CD8-positive, alpha-beta T cell (primary cell): ENCODE measurements at regions of chr22 and their contacts with region 1.

Region 1: GRCh38 chr22:40950962-40951794 is at the start of gene RBX1:
- DNase-seq: peak; percentile 97 to 99 (median 99)
- ATAC-seq: peak; percentile 84
- H3K4me3 ChIP-seq: peak within 1 kb of the TSS; percentile 95 to 100
- H3K4me3 Mint-ChIP-seq: peak within 1 kb of the TSS; percentile 100
- H3K27ac ChIP-seq: peak within 1 kb of the TSS; percentile 99 to 100
- H3K27ac Mint-ChIP-seq: peak within 1 kb of the TSS; percentile 100
- H3K4me1 ChIP-seq: peaks cover 28% of the 10 kb centered on the region
- H3K4me1 Mint-ChIP-seq: peaks cover 33% of the 10 kb centered on the region
- H3K27me3 ChIP-seq: no peaks in the 10 kb centered on the region
- H3K27me3 Mint-ChIP-seq: no peaks in the 10 kb centered on the region
- CTCF ChIP-seq: no peak
- total RNA-seq, gene RBX1: 22.1 to 22.3 TPM

Region 2: DNA sequence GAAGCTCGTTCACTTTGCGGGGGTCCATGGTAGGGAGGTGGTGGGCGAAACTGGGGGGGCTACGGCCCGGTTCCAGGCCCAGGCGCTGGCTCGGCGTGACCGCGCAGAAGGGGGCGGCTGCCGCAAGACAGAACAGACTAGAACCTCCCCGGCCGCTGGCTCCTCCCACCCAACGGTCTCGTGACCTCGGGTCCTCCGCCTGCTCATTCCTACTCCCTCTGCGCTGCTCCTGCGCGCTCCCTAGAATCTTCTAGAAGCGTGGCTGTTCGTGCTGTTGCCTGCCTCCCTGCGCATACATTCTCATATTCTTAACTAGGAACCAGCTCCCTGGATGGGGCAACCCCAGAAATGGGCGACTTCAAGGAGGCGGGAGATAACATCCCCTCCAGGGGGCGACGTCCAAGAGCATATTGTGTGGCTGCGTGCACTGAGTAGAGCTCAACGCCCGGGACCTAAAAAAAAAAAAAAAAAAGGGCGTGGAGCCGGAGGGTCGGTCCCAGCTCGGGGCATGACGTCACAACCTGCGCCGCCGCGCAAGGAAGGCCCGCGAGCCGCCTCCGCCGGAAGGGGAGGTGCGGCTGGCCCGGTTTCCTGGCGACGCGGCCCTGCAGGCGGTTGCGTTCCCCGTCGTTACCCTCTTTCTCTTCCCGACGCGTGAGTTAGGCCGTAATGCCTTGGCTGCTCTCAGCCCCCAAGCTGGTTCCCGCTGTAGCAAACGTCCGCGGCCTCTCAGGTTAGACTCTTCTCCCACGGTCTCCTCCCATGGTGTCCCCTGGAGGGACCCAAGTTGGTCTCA is 94.5 kb before region 1 on chr22 and contains the starts of genes ST13 and XPNPEP3:
- CTCF ChIA-PET with region 1: no interaction called
- POLR2A ChIA-PET with region 1: interaction called, 5 read pairs
- intact Hi-C with region 1: loop called (anchors 1 kb)
- DNase-seq: peak; percentile 92 to 98 (median 97)
- ATAC-seq: peak; percentile 88
- H3K4me3 ChIP-seq: peak within 1 kb of the TSS; percentile 85 to 97
- H3K4me3 Mint-ChIP-seq: peak within 1 kb of the TSS; percentile 98
- H3K27ac ChIP-seq: peak within 1 kb of the TSS; percentile 97 to 99
- H3K27ac Mint-ChIP-seq: peak within 1 kb of the TSS; percentile 100
- H3K4me1 ChIP-seq: peaks cover 40% of the 10 kb centered on the region
- H3K4me1 Mint-ChIP-seq: peaks cover 65% of the 10 kb centered on the region
- H3K27me3 ChIP-seq: no peaks in the 10 kb centered on the region
- H3K27me3 Mint-ChIP-seq: no peaks in the 10 kb centered on the region
- CTCF ChIP-seq: peak; percentile 42
- total RNA-seq, gene ST13: 143 to 160 TPM
- total RNA-seq, gene XPNPEP3: 13.9 to 15.2 TPM

Region 3: DNA sequence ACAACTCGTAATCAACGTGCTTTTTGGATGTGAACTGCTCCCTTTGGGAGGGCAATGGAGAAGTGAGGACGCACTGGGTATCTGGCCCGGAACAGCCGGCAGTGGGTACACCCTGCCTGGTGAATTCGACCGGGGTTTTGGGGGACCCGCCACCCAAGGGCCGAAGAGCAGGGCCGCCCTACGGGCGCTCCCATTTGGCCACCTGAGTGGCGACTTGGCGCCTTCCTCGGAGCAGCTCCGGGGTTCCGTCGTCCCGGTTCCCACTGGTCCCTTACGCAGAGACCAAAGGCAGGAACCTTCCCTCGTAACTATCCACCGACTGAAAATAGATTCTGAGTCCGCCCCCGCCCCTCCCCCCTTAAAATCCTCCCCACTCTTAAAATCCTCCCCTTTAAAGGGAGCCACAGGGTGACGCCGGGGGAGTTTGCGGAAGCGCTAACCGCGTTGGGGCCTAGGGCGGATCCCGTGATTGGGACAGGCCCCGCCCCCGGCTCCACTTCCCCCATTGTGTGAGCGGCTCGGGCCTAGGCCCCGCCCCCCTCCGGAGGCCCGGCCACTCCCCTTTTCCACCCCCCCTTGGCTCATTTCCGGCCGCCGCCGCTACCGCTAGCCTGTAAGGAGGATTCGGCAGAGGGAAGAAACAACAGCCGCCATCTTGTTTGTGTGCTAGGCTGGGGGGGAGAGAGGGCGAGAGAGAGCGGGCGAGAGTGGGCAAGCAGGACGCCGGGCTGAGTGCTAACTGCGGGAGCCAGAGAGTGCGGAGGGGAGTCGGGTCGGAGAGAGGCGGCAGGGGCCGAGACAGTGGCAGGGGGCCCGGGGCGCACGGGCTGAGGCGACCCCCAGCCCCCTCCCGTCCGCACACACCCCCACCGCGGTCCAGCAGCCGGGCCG is 140.2 kb after region 1 on chr22:
- CTCF ChIA-PET with region 1: interaction called, 9 read pairs
- POLR2A ChIA-PET with region 1: interaction called, 70 read pairs
- intact Hi-C with region 1: loop called in 1 of 2 experiments (anchors 1 kb)
- DNase-seq: peak; percentile 99 to 100 (median 99)
- ATAC-seq: peak; percentile 88
- H3K4me3 ChIP-seq: peak overlapping the region; percentile 91 to 97
- H3K4me3 Mint-ChIP-seq: peak overlapping the region; percentile 99
- H3K27ac ChIP-seq: peak overlapping the region; percentile 93 to 96
- H3K27ac Mint-ChIP-seq: peak overlapping the region; percentile 100
- H3K4me1 ChIP-seq: peaks cover 16% of the 10 kb centered on the region
- H3K4me1 Mint-ChIP-seq: peaks cover 31% of the 10 kb centered on the region
- H3K27me3 ChIP-seq: no peaks in the 10 kb centered on the region
- H3K27me3 Mint-ChIP-seq: no peaks in the 10 kb centered on the region
- CTCF ChIP-seq: no peak

Region 4: GRCh38 chr22:41285820-41286638 is 334.9 kb after region 1 on chr22 and contains the start of gene RANGAP1:
- CTCF ChIA-PET with region 1: no interaction called
- POLR2A ChIA-PET with region 1: interaction called, 5 read pairs
- intact Hi-C with region 1: loop called in 1 of 2 experiments (anchors 1 kb)
- DNase-seq: peak; percentile 96 to 100 (median 98)
- ATAC-seq: peak; percentile 86
- H3K4me3 ChIP-seq: peak within 1 kb of the TSS; percentile 76 to 99
- H3K4me3 Mint-ChIP-seq: peak within 1 kb of the TSS; percentile 92
- H3K27ac ChIP-seq: peak within 1 kb of the TSS; percentile 87 to 95
- H3K27ac Mint-ChIP-seq: peak within 1 kb of the TSS; percentile 98
- H3K4me1 ChIP-seq: peaks cover 15% of the 10 kb centered on the region
- H3K4me1 Mint-ChIP-seq: peaks cover 32% of the 10 kb centered on the region
- H3K27me3 ChIP-seq: no peaks in the 10 kb centered on the region
- H3K27me3 Mint-ChIP-seq: no peaks in the 10 kb centered on the region
- CTCF ChIP-seq: no peak
- total RNA-seq, gene RANGAP1: 200 to 210 TPM

Region 5: GRCh38 chr22:41468381-41469217 is 517.4 kb after region 1 on chr22 and contains the starts of genes ACO2 and PHF5A:
- CTCF ChIA-PET with region 1: no interaction called
- POLR2A ChIA-PET with region 1: interaction called, 4 read pairs
- intact Hi-C with region 1: loop called (anchors 2 to 5 kb)
- DNase-seq: peak; percentile 97 to 99 (median 98)
- ATAC-seq: peak; percentile 90
- H3K4me3 ChIP-seq: peak within 1 kb of the TSS; percentile 92 to 94
- H3K4me3 Mint-ChIP-seq: peak within 1 kb of the TSS; percentile 91
- H3K27ac ChIP-seq: peak within 1 kb of the TSS; percentile 97 to 99
- H3K27ac Mint-ChIP-seq: peak within 1 kb of the TSS; percentile 99
- H3K4me1 ChIP-seq: peaks cover 23% of the 10 kb centered on the region
- H3K4me1 Mint-ChIP-seq: peaks cover 56% of the 10 kb centered on the region
- H3K27me3 ChIP-seq: no peaks in the 10 kb centered on the region
- H3K27me3 Mint-ChIP-seq: no peaks in the 10 kb centered on the region
- CTCF ChIP-seq: no peak
- total RNA-seq, gene ACO2: 83.7 to 95.2 TPM
- total RNA-seq, gene PHF5A: 52.9 to 57.4 TPM

Region 6: GRCh38 chr22:41822317-41823060 is 871.3 kb after region 1 on chr22:
- CTCF ChIA-PET with region 1: no interaction called
- POLR2A ChIA-PET with region 1: no interaction called
- intact Hi-C with region 1: no loop called
- DNase-seq: peak in 5 of 9 experiments; percentile 21 to 88 (median 48)
- ATAC-seq: peak; percentile 95
- H3K4me3 ChIP-seq: no peak overlapping the region
- H3K4me3 Mint-ChIP-seq: no peak overlapping the region
- H3K27ac ChIP-seq: no peak overlapping the region
- H3K27ac Mint-ChIP-seq: peak overlapping the region; percentile 72
- H3K4me1 ChIP-seq: no peaks in the 10 kb centered on the region
- H3K4me1 Mint-ChIP-seq: peaks cover 8% of the 10 kb centered on the region
- H3K27me3 ChIP-seq: no peaks in the 10 kb centered on the region
- H3K27me3 Mint-ChIP-seq: no peaks in the 10 kb centered on the region
- CTCF ChIP-seq: peak; percentile 57